ENCODE measurements at regions of chr5 and their contacts with region 1.

Region 1: DNA sequence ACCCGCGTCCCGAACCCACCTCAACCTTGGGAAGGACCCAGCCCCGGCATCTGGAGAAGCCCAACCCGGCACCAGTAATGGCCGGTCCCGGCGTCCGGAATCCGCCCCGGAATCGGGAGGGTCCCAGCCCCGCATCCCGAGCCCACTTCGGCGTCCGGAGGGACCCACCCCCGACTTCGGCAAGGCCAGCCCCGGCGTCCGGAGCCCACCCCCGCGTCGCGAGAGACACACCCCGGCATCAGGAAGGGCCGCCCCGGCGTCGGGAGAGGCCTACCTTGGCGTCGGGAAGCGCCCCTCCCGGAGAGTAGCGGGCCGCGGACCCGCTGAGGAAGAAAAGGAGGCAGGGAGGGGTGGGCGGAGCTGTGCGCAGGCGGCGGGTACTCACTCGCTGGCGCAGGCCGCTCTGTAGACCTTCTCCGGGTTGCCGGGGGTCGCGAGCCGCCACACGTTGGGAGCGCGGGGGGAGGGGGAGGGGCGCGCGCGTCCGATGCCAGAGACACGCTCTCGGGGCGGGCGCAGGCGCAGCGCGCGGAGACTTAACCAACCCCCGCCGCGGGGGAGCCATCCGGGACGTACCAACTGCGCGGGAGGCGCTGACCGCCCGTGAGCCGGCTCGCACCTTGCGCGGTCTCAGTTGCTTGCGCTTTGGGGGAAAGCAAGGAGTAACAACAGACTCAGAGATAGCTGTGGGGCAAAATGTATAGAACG is at the start of gene UIMC1:
- DNase-seq: peak; percentile 80 to 96
- H3K4me3 ChIP-seq: peak within 1 kb of the TSS; percentile 81
- H3K27ac ChIP-seq: peak within 1 kb of the TSS; percentile 53
- H3K4me1 ChIP-seq: peaks cover 11% of the 10 kb centered on the region; the same call in 1 of the 2 replicates
- H3K27me3 ChIP-seq: no peaks in the 10 kb centered on the region
- CTCF ChIP-seq: no peak
- total RNA-seq, gene UIMC1: 48.3 and 59.5 TPM in 2 replicates

Region 2: DNA sequence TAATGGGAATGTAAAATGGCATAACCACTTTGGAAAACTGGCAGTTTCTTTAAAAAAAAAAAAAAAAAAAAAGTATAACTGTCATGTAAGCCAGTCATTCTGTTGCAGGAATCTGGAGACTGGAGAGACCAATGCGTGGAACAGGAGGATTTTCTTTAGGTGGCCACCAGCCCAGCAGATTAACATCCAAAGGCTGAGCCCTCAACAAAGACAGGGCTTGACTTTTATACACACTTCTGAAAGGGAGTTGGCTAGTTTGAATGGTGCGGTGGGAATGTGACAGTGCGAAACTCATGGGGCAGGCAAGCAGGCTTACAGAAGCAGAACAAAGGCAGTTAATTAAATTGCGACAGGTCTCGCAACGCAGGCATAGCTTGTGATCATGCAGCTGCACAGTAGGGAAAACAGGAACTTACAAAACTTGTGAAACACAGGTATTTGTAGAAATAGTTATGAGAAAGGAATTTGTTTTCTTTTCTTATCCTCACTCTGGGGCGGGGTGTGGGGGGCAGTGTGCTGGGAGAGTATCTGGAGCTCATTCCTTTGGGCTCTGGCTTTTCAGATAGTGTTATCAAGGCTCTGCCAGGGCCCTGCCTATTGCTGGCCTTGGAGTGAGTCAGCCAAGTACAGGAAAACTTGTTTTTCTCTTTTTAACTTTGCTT is 11.8 kb before region 1 on chr5:
- CTCF ChIA-PET with region 1: interaction called, 11 read pairs
- POLR2A ChIA-PET with region 1: no interaction called
- intact Hi-C with region 1: no loop called
- DNase-seq: peak; percentile 40 to 94
- H3K4me3 ChIP-seq: no peak overlapping the region
- H3K27ac ChIP-seq: peak overlapping the region; percentile 96
- H3K4me1 ChIP-seq: peaks cover 26% of the 10 kb centered on the region
- H3K27me3 ChIP-seq: no peaks in the 10 kb centered on the region
- CTCF ChIP-seq: no peak

Region 3: DNA sequence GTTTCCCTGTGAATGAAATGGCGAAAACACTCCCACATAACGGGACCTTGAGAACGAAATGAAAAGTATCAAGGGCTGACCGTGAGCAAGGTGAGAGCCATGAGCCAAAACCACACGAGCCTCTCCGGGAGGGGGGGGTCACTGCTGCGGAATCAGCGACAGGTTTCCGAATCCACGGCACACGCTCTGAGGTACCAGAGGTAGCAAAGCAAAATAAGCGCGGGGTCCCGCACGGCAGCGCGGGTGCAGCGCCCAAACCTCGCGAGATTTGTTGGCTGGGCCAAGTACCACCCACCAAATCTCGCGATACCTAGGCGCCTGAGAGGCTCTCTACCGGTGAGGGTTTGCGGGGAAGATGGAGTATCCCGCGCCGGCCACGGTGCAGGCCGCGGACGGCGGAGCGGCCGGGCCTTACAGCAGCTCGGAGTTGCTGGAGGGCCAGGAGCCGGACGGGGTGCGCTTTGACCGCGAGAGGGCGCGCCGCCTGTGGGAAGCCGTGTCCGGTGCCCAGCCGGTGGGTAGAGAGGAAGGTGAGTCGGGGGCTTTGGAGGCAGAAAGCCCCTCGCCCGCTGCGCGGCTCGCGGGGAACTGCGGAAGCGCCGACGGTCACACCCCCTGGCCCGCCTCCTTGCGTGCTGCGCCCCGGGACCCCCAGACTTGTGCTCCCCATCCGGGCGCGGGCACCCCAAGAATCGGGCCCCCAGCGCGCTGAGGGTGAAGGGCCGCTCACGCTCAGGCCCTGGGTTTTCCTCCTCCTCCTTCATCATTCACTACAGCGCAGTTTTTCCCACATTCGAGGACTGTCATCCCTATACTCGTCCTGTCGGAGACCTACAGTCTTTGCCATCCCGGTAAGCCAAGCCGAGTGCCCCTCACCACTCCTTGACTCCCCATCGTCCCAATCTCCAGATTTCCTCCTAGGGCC is 16.2 kb after region 1 on chr5 and contains the start of gene ZNF346:
- CTCF ChIA-PET with region 1: no interaction called
- POLR2A ChIA-PET with region 1: interaction called, 22 read pairs
- intact Hi-C with region 1: loop called (anchors 1 kb)
- DNase-seq: peak; percentile 82 to 89
- H3K4me3 ChIP-seq: peak within 1 kb of the TSS; percentile 98
- H3K27ac ChIP-seq: peak within 1 kb of the TSS; percentile 39
- H3K4me1 ChIP-seq: peaks cover 13% of the 10 kb centered on the region
- H3K27me3 ChIP-seq: no peaks in the 10 kb centered on the region
- CTCF ChIP-seq: peak; percentile 59
- total RNA-seq, gene ZNF346: 23.8 and 26.0 TPM in 2 replicates

Region 4: DNA sequence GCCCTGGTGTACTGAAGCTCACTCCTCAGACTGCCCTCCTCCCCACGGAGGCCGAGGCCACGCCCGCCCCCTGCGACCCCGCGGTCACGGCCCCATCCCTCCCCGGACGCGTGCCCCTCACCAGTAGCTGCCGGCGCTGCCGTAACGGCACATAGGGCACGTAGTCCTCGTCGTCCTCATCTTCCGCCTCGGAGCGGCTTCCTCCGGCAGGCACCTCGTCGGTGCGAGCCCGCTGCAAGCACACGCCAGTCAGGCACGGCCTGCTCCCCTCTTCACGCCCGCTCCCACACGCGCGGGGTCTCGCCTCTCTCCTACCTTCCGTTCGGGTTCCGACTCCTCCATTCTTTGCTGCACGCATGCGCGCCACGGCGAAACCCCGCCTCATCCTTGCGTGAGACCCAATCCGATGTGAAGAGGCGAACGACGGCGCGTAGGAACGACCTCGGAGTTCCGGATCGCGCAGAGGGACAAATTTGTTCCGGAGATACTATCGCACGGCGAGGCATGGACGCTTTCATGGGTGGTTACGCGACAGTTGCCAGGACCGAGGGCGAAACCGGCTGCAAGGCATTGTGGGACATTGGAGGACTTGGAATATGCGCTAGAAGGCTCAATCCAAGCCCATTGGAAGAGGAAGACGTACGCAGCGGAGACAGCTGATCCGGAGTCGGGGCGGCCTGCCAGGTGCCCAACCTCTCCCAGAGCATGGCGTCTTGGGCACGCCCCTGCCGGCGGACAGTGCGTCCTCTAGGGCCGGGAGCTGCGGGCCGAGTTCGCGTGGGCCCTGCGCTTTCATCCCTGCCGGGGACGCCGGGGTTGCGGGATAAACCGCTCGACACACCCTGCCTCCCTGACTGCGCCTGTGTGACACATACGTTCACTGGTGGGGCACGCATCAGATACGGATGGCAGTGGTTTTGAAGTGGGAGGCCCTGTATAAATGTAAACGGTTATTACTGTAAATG is 510.5 kb after region 1 on chr5 and contains the start of gene DDX41:
- CTCF ChIA-PET with region 1: no interaction called
- POLR2A ChIA-PET with region 1: no interaction called
- intact Hi-C with region 1: loop called (anchors 5 kb)
- DNase-seq: peak; percentile 96 to 98
- H3K4me3 ChIP-seq: peak within 1 kb of the TSS; percentile 93
- H3K27ac ChIP-seq: peak within 1 kb of the TSS; percentile 18
- H3K4me1 ChIP-seq: peaks cover 18% of the 10 kb centered on the region
- H3K27me3 ChIP-seq: no peaks in the 10 kb centered on the region
- CTCF ChIP-seq: no peak
- total RNA-seq, gene DDX41: 90.8 and 93.1 TPM in 2 replicates

Measured in PC-9 (cell line).